Naive thymus-derived CD4-positive, alpha-beta T cell (primary cell): ENCODE measurements at regions of chrX and their contacts with region 1.

Region 1: DNA sequence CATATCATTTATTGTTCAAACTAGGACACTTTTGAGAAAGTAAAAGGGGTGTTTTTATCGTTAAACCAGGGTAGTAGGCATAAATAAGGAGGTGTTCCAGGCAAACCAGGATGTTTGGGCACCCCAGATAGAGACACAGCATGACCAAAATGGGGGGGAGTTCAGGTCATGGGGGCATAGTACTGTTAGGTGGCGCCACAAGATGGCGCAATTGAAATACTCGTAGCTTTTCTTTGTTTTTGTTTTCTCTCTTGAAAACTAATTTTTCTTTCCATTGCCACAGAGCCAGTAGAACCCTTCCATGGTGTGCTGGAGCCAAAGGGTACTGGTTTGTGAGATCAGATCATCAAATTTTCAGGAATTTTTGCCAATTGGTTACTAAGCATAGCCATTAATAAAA is 283.4 kb downstream of the BCOR start:
- DNase-seq: peak in 6 of 9 donors; percentile 17 to 46 (median 32)
- ATAC-seq: peak; percentile 75
- H3K4me3 ChIP-seq: no peak overlapping the region
- H3K4me3 Mint-ChIP-seq: no peak overlapping the region
- H3K27ac ChIP-seq: no peak overlapping the region
- H3K27ac Mint-ChIP-seq: no peak overlapping the region
- H3K4me1 ChIP-seq: no peaks in the 10 kb centered on the region
- H3K4me1 Mint-ChIP-seq: peaks cover 0 to 36% (median 12%) of the 10 kb centered on the region in 7 donors
- H3K27me3 ChIP-seq: no peaks in the 10 kb centered on the region
- H3K27me3 Mint-ChIP-seq: no peaks in the 10 kb centered on the region

Region 2: GRCh38 chrX:39772057-39772832 is 42.1 kb before region 1 on chrX:
- CTCF ChIA-PET with region 1: no interaction called
- POLR2A ChIA-PET with region 1: no interaction called
- intact Hi-C with region 1: loop called in 1 of 2 experiments (anchors 5 kb)
- DNase-seq: peak in 6 of 9 donors; percentile 18 to 52 (median 30)
- ATAC-seq: peak; percentile 63
- H3K4me3 ChIP-seq: peak overlapping the region; percentile 17
- H3K4me3 Mint-ChIP-seq: peak overlapping the region; percentile 43 to 80 (median 74)
- H3K27ac ChIP-seq: peak overlapping the region; percentile 43
- H3K27ac Mint-ChIP-seq: peak overlapping the region; percentile 86 to 98 (median 94)
- H3K4me1 ChIP-seq: peaks cover 26 to 32% of the 10 kb centered on the region in 2 donors
- H3K4me1 Mint-ChIP-seq: peaks cover 20 to 50% (median 43%) of the 10 kb centered on the region in 7 donors
- H3K27me3 ChIP-seq: no peaks in the 10 kb centered on the region
- H3K27me3 Mint-ChIP-seq: no peaks in the 10 kb centered on the region

Region 3: GRCh38 chrX:40062525-40063155 is 248.2 kb after region 1 on chrX:
- CTCF ChIA-PET with region 1: no interaction called
- POLR2A ChIA-PET with region 1: no interaction called
- intact Hi-C with region 1: loop called (anchors 1 to 5 kb)
- DNase-seq: no peak
- ATAC-seq: no peak
- H3K4me3 ChIP-seq: no peak overlapping the region
- H3K4me3 Mint-ChIP-seq: peak overlapping the region in 2 of 10 donors; percentile 25 to 41
- H3K27ac ChIP-seq: no peak overlapping the region
- H3K27ac Mint-ChIP-seq: peak overlapping the region in 7 of 9 donors; percentile 33 to 97 (median 74)
- H3K4me1 ChIP-seq: peaks cover 0 to 37% of the 10 kb centered on the region in 2 donors
- H3K4me1 Mint-ChIP-seq: peaks cover 17 to 59% (median 48%) of the 10 kb centered on the region in 7 donors
- H3K27me3 ChIP-seq: no peaks in the 10 kb centered on the region
- H3K27me3 Mint-ChIP-seq: no peaks in the 10 kb centered on the region

Region 4: GRCh38 chrX:40153335-40154249 is 339.2 kb after region 1 on chrX:
- CTCF ChIA-PET with region 1: no interaction called
- POLR2A ChIA-PET with region 1: no interaction called
- intact Hi-C with region 1: loop called in 1 of 2 experiments (anchors 1 kb)
- DNase-seq: peak in 4 of 9 donors; percentile 32 to 75 (median 56)
- ATAC-seq: peak; percentile 70
- H3K4me3 ChIP-seq: peak overlapping the region; percentile 50
- H3K4me3 Mint-ChIP-seq: peak overlapping the region; percentile 81 to 88 (median 84)
- H3K27ac ChIP-seq: peak overlapping the region; percentile 27
- H3K27ac Mint-ChIP-seq: peak overlapping the region in 7 of 9 donors; percentile 39 to 84 (median 70)
- H3K4me1 ChIP-seq: peaks cover 0 to 4% of the 10 kb centered on the region in 2 donors
- H3K4me1 Mint-ChIP-seq: peaks cover 0 to 22% (median 14%) of the 10 kb centered on the region in 7 donors
- H3K27me3 ChIP-seq: no peaks in the 10 kb centered on the region
- H3K27me3 Mint-ChIP-seq: peaks cover 0 to 8% (median 0%) of the 10 kb centered on the region in 5 donors

Region 5: DNA sequence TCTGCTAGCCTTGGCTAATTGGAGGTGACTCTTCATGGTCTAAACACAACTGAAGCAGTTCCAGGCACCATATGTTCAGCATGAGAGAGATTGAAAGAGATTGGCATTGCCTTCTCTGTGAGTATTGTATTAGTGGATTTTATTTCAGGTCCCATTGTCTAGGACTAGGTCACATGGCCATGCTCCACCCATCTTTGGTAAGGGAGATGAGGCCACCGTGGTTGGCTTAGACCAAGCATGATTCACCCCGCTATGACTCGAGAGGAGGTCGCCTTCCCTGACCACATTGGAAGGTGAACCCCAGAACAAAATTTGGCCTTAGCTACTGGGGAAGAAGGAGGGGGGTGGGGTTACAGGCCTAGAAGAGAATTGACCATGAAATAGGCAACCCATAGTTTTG is 393.2 kb after region 1 on chrX:
- CTCF ChIA-PET with region 1: no interaction called
- POLR2A ChIA-PET with region 1: no interaction called
- intact Hi-C with region 1: loop called in 1 of 2 experiments (anchors 1 kb)
- DNase-seq: peak in 1 of 9 donors; percentile 22
- ATAC-seq: peak; percentile 68
- H3K4me3 ChIP-seq: no peak overlapping the region
- H3K4me3 Mint-ChIP-seq: no peak overlapping the region
- H3K27ac ChIP-seq: no peak overlapping the region
- H3K27ac Mint-ChIP-seq: no peak overlapping the region
- H3K4me1 ChIP-seq: peaks cover under 1 to 2% of the 10 kb centered on the region in 2 donors
- H3K4me1 Mint-ChIP-seq: peaks cover 0 to 16% (median 14%) of the 10 kb centered on the region in 7 donors
- H3K27me3 ChIP-seq: no peaks in the 10 kb centered on the region
- H3K27me3 Mint-ChIP-seq: no peaks in the 10 kb centered on the region

Region 6: GRCh38 chrX:40266490-40267333 is 452.3 kb after region 1 on chrX:
- CTCF ChIA-PET with region 1: interaction called, 3 read pairs
- POLR2A ChIA-PET with region 1: no interaction called
- intact Hi-C with region 1: loop called (anchors 1 to 2 kb)
- DNase-seq: peak; percentile 10 to 48 (median 35)
- ATAC-seq: peak; percentile 84
- H3K4me3 ChIP-seq: peak overlapping the region; percentile 61
- H3K4me3 Mint-ChIP-seq: peak overlapping the region; percentile 66 to 87 (median 80)
- H3K27ac ChIP-seq: peak overlapping the region; percentile 8
- H3K27ac Mint-ChIP-seq: peak overlapping the region in 1 of 9 donors; percentile 47
- H3K4me1 ChIP-seq: no peaks in the 10 kb centered on the region
- H3K4me1 Mint-ChIP-seq: peaks cover 0 to 13% (median 6%) of the 10 kb centered on the region in 7 donors
- H3K27me3 ChIP-seq: no peaks in the 10 kb centered on the region
- H3K27me3 Mint-ChIP-seq: no peaks in the 10 kb centered on the region